Panc1 (cell line): ENCODE measurements at regions of chr17 and their contacts with region 1.

Region 1: DNA sequence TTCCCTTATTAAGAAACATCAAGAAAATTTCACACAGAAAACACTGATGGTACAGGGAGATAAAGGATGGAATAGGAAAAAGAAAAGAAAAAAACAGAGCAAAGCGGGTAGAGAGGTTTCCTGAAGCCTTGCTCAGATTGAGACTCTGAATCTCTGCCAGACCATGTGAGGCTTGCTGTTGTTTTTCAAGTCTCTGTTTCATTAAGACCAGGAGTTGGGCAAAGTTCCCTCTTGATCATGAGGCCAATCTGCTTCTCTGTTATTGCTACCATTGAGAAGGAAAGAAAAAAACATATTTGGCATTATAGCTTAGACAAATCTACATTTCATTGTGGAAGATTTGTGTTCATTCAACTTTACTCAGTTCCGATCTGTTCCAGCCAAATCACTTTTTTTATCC is 201.6 kb upstream of the SOX9 start:
- DNase-seq: no peak
- ATAC-seq: no peak
- H3K4me3 ChIP-seq: no peak overlapping the region
- H3K27ac ChIP-seq: no peak overlapping the region
- H3K4me1 ChIP-seq: no peaks in the 10 kb centered on the region
- H3K27me3 ChIP-seq: peaks cover 4% of the 10 kb centered on the region
- CTCF ChIP-seq: no peak

Region 2: DNA sequence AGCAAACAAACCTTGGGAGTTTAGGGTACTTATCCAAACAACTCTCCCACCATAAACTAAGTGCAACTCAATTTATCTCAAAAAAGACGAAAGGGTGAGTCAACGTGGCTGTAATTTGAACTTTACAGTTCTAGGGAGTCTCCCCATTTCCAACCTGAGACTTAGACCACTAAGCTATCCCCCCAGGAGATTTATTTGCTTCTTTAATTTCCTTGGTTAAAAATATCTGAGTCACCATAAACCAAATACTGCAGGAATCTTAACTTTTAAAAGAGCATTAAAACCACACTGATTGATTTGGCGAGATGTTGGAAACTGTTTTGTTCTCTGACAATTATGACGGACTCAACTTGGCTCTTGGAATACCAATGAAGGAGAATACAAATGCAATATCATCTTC is 97.7 kb before region 1 on chr17:
- CTCF ChIA-PET with region 1: no interaction called
- POLR2A ChIA-PET with region 1: no interaction called
- in situ Hi-C with region 1: no loop called
- intact Hi-C with region 1: no loop called
- DNase-seq: no peak
- ATAC-seq: no peak
- H3K4me3 ChIP-seq: no peak overlapping the region
- H3K27ac ChIP-seq: no peak overlapping the region
- H3K4me1 ChIP-seq: no peaks in the 10 kb centered on the region
- H3K27me3 ChIP-seq: peaks cover 18% of the 10 kb centered on the region; the same call in 1 of the 2 replicates
- CTCF ChIP-seq: no peak

Region 3: DNA sequence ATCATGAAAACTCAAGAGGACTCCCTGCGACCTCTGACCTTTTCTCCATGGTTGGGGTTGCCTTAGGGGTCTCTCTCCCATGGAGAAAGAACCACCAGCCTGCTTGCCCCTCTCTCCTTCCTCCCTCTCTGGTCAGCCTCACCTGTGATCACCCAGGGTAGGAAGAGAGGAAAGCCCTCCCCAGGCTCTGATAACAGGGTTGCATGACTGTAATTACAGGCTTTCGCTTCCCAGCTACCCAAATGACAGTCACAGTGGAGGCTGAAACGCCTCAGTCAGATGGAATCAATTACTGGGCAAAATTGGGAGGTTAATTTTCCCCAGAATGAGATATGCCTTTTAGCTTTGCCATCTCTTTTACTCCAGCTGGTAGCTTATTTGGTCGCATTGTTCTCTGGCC is 64.2 kb before region 1 on chr17:
- CTCF ChIA-PET with region 1: no interaction called
- POLR2A ChIA-PET with region 1: no interaction called
- in situ Hi-C with region 1: no loop called
- intact Hi-C with region 1: no loop called
- DNase-seq: no peak
- ATAC-seq: no peak
- H3K4me3 ChIP-seq: no peak overlapping the region
- H3K27ac ChIP-seq: no peak overlapping the region
- H3K4me1 ChIP-seq: no peaks in the 10 kb centered on the region
- H3K27me3 ChIP-seq: no peaks in the 10 kb centered on the region
- CTCF ChIP-seq: no peak

Region 4: DNA sequence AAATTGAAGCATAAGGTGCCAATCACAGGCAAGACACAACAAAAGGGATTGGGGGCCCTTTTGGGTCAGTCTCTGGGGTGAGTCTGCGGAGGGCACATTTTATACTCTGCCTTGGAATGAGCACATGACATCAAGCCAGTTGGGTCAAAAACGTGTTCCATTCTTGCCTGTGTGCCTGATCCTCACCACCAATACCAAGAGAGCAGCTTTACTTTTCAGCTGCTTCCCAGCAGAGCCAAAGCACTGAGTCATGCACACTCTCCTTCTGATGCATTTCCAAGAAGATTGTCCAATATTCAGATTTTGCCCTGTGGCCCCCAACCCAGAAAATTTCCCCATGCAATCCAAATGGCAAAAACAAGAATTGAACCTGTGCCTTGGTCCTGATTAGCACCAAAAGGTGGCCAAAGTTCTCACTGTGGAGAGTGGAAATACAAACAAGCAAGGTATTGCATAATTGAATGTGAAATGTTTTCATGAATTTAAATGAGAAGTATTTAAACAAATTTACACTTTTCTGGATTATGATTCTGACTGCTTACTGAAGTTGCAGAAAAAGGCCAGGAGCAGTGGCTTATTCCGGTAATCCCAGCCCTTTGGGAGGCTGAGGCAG is 16.2 kb before region 1 on chr17:
- CTCF ChIA-PET with region 1: no interaction called
- POLR2A ChIA-PET with region 1: no interaction called
- in situ Hi-C with region 1: no loop called
- intact Hi-C with region 1: no loop called
- DNase-seq: no peak
- ATAC-seq: no peak
- H3K4me3 ChIP-seq: no peak overlapping the region
- H3K27ac ChIP-seq: no peak overlapping the region
- H3K4me1 ChIP-seq: no peaks in the 10 kb centered on the region
- H3K27me3 ChIP-seq: no peaks in the 10 kb centered on the region
- CTCF ChIP-seq: no peak

Region 5: DNA sequence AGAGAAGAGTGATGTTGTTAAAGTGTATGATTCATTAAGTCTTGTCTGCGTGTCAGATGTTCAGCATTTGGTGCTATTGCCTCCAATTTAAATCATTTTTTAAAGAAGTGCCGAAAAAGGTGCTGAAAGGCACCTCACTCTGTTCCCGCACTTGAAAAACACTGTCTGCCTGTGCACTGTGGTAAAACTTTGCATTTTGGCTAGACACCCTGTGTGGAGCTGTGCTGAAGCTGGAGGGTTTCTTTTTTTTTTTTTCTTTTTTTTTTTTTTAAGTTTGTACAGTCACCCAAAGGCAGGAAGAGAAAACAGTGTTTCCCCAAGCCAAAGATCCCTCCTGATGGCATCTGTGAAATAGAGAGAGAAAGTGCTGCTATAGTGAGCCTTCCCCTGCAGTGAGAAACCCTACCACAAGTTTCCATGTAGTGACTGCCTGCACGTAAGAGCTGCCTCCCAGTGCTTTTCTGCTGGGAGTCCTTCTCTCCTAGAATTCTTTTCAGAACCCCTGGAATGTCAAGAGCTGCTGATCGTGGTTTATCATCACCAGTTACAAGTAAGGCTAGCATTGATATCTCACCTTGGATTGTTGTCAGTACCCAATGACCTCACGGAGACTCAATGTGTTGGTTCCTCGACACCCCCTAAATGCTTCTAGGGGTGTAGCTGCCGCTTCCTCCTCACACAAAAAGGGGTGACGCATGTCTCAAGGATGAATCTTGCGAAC is 85.6 kb after region 1 on chr17:
- CTCF ChIA-PET with region 1: no interaction called
- POLR2A ChIA-PET with region 1: interaction called, 14 read pairs
- in situ Hi-C with region 1: no loop called
- intact Hi-C with region 1: no loop called
- DNase-seq: no peak
- ATAC-seq: no peak
- H3K4me3 ChIP-seq: no peak overlapping the region
- H3K27ac ChIP-seq: no peak overlapping the region
- H3K4me1 ChIP-seq: no peaks in the 10 kb centered on the region
- H3K27me3 ChIP-seq: no peaks in the 10 kb centered on the region
- CTCF ChIP-seq: no peak

Region 6: GRCh38 chr17:72039490-72039889 is 120.3 kb after region 1 on chr17:
- CTCF ChIA-PET with region 1: no interaction called
- POLR2A ChIA-PET with region 1: no interaction called
- in situ Hi-C with region 1: no loop called
- intact Hi-C with region 1: no loop called
- DNase-seq: no peak
- ATAC-seq: no peak
- H3K4me3 ChIP-seq: no peak overlapping the region
- H3K27ac ChIP-seq: no peak overlapping the region
- H3K4me1 ChIP-seq: no peaks in the 10 kb centered on the region
- H3K27me3 ChIP-seq: peaks cover 9% of the 10 kb centered on the region; the same call in 1 of the 2 replicates
- CTCF ChIP-seq: no peak